ENCODE measurements at regions of chr7 and their contacts with region 1.

Region 1: DNA sequence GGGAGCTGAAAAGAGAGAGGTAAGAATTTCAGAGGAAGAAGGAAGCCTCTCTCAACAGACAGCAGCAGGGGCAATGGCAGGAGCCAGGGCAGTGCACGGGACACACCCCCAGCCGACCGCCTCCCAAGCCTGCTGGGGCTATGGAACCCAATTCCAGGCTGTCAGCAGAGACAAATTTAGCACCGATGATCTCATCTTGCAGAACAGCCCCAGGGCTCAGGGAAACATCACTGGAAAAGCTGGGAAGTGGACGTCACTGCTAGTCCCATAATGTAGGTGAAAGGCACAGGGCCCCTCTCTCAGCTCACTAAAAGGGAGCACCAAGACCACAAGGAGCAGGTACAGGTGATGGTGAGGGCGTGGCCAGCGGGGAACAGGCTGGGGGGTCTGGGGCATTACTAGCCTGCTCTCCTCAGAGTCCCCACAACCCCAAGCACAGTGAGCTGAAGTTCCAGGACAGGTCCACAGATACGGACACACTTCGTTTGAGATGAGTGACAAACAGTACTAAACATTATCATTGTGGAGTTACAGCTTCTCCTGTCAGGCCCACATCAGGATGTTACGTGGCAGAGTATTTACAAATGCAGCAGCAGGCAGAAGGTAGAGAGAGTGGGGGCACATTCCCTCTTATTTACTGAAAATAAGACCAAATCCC is 103.7 kb downstream of the PLXNA4 start:
- DNase-seq: peak; percentile 78
- ATAC-seq: peak; percentile 95 to 97

Region 2: DNA sequence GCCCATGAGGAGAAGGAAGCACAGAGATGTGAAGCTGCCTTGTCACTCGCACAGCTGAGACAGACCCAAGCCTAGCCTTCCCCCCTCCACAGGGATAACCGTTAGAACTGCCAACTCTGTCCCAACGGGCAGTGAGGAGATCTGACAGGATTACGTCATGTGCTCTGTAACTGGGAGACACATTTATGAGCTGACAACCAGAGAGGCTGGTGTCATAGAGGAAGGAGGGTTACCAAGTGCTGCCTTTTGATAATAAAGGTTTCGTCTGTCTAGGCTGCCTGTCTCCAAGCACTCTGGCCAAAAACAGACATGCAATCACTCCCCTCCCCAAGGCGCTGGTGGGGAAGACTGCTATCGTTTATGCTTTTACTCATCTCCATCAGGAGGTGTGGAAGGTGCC is 62.2 kb before region 1 on chr7:
- intact Hi-C with region 1: loop called in 1 of 2 experiments (anchors 10 kb)
- DNase-seq: peak; percentile 60
- ATAC-seq: peak; percentile 93

Region 3: DNA sequence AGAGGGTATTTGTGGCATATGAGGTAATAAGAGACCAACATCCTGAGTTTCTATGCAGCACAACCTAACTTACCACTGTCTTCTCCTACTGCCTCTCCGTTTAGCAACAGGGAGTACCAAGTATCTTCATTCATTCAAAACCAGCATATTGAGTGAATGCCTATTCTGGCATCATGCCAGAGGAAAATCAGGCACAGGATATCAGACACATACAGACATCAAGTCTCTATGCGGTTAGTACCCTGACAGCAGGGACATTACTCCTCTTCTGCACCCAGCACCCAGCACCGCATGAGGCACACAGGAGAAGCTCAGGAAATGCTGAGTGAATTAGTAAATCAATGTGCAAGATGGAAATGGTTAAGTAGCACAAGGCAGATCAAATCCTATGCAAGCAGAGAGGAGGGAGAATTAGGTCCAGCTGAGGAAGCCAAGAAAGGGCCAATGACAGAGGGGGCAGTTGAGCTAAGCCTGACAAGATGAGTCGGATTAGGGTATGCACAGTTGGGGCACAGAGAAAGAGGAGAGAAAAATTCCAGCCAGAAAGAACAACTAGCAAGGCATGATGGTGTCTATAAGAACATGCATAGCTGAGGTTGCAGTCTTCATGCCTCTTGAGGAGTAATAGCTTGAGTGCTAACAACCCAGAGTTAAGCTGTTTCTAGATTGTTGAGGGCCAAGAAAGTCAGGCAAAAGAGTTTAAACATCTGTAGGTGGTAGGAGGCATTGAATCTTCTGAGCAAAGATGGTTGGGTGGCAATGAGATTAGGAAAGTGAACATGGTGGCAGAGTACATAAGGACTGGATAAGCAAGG is 42.3 kb before region 1 on chr7:
- intact Hi-C with region 1: no loop called
- DNase-seq: no peak
- ATAC-seq: no peak

Region 4: DNA sequence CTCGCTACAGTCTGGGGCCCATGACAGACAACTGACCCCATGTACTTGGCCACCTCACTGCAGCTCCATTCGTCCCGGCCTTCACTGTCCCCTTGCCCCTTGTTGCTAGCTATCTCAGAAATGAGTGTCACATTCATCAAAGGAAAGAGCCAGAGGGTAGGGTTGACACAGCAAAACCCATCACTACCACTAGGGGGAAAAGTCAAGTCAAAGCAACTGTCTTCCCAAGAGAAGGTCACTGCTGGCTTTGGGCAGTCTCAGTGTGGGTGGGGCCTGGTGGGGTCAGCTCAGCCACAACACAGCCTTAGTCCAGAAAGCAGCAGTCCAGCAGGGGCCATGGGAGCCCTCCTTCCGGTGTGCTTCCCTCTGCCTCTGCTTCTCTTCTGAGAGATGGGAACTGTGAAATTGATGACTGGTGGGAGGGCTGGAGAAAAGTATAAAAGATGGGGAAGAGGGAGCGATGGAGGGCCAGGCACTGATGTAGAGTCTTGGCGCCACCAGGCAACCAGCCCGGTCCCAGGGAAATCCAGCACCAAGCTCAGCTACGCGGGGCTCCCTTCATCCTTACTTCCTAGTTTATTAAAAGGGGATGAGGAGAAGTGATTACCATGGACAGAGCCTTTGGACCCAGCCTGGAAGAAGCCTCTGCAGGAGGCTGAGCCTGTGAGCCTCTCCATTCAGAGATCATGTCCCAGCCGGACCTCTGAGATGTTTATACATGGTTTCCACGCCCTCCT is 45.7 kb after region 1 on chr7:
- intact Hi-C with region 1: no loop called
- DNase-seq: no peak
- ATAC-seq: no peak

Region 5: GRCh38 chr7:132609222-132609621 is 136.6 kb after region 1 on chr7:
- intact Hi-C with region 1: no loop called
- DNase-seq: no peak
- ATAC-seq: no peak

Region 6: DNA sequence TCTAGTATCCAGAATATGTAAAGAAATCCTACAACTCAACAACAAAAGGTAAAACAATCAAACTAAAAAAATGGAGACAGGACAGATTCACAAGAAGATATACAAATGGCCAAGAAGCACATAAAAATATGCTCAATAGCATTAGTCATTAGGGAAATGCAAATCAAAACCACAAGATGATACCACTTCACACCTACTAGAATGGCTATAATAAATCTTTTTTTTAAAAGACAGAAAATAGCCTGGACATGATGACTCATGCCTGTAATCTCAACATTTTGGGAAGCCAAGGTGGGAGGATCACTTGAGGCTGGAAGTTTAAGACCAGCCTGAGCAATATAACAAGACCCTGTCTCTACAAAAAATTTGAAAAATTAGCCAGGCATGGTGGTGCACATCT is 637.2 kb after region 1 on chr7:
- intact Hi-C with region 1: no loop called
- DNase-seq: no peak
- ATAC-seq: no peak